Panc1 (cell line): ENCODE measurements at regions of chr11 and their contacts with region 1.

Region 1: DNA sequence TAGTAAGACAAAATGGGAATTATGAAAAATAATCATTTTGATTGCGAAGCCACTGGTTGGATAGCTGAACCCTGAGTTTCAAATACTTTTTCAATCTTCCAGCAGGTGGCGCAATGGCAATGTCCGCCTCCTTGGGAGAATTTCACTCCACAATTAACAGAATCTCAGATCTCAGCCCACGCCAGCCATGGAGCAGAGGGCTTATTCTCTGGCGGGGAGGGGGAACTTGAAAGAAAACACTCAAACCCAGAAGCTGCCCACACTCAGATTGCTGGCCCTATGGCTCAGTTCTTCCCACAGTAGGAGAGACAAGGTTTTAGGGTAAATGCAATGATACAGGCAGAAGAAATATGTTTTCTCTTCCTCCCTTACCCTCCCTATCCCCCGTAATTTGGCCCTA is 38.7 kb upstream of the RCN1 start:
- DNase-seq: no peak
- ATAC-seq: peak; percentile 73
- H3K4me3 ChIP-seq: no peak overlapping the region
- H3K27ac ChIP-seq: no peak overlapping the region
- H3K4me1 ChIP-seq: no peaks in the 10 kb centered on the region
- H3K27me3 ChIP-seq: peaks cover 24% of the 10 kb centered on the region
- CTCF ChIP-seq: peak; percentile 82

Region 2: DNA sequence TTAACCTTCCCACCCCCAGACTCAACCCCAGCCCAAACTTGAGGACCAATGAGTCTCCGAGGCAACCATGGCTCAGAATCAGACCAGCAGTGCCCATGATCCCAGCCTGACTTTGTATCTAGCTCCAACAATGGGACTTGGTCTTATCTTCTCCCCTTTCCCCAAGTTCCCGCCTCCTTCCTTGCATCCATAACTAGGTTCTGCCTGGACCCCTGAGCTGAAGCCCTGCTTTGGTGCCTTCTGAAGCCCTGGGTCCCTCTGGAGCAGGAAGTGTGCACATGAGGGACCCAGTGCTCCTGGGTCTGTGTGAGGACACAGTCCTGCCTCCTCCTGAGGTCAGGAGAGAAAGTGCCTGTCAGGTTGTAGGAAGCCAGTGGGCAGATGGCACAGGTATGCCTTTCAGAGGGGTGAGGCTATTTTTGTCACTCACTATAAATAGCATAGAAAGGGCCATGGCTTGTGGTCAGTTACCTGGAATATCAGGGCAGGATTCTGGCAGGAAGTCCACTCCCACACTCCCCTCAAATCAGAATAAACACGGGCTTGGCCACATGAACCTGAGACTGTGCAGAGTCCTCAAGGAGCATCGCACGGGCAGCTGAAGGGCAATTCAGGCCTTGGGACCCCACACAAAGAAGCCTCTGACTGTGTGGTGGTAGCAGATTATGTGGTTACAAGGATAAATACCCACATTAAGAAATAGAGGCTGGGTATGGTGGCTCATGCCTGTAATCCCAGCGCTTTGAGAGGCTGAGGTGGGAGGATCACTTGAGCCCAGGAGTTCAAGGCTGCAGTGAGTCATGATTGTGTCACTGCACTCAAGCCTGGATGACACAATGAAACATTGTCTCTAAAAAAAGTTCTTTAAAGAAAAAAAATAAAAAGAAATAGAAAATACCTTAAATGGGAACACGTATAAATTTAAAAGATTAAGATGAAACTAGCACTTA is 66.1 kb after region 1 on chr11:
- CTCF ChIA-PET with region 1: no interaction called
- POLR2A ChIA-PET with region 1: no interaction called
- in situ Hi-C with region 1: no loop called
- intact Hi-C with region 1: no loop called
- DNase-seq: peak; percentile 7
- ATAC-seq: peak; percentile 85
- H3K4me3 ChIP-seq: no peak overlapping the region
- H3K27ac ChIP-seq: no peak overlapping the region
- H3K4me1 ChIP-seq: no peaks in the 10 kb centered on the region
- H3K27me3 ChIP-seq: peaks cover 8% of the 10 kb centered on the region
- CTCF ChIP-seq: no peak

Region 3: GRCh38 chr11:32297611-32298011 is 245.4 kb after region 1 on chr11:
- CTCF ChIA-PET with region 1: no interaction called
- POLR2A ChIA-PET with region 1: no interaction called
- in situ Hi-C with region 1: no loop called
- intact Hi-C with region 1: loop called (anchors 10 kb)
- DNase-seq: no peak
- ATAC-seq: peak; percentile 78; the same call in 1 of the 2 replicates
- H3K4me3 ChIP-seq: no peak overlapping the region
- H3K27ac ChIP-seq: no peak overlapping the region
- H3K4me1 ChIP-seq: no peaks in the 10 kb centered on the region
- H3K27me3 ChIP-seq: peaks cover 4% of the 10 kb centered on the region; the same call in 1 of the 2 replicates
- CTCF ChIP-seq: peak; percentile 60